ENCODE measurements at regions of chr6 and their contacts with region 1.

Region 1: GRCh38 chr6:4066029-4066755 is 12.7 kb downstream of the FAM217A start:
- DNase-seq: no peak
- CTCF ChIP-seq: no peak

Region 2: GRCh38 chr6:3939964-3940363 is 126.2 kb before region 1 on chr6:
- in situ Hi-C with region 1: no loop called
- DNase-seq: no peak
- CTCF ChIP-seq: no peak

Region 3: GRCh38 chr6:4155848-4156466 is 89.8 kb after region 1 on chr6:
- in situ Hi-C with region 1: loop called (anchors 10 kb)
- DNase-seq: peak; percentile 78
- CTCF ChIP-seq: peak; percentile 77